ENCODE measurements at regions of chr11 and their contacts with region 1.

Region 1: DNA sequence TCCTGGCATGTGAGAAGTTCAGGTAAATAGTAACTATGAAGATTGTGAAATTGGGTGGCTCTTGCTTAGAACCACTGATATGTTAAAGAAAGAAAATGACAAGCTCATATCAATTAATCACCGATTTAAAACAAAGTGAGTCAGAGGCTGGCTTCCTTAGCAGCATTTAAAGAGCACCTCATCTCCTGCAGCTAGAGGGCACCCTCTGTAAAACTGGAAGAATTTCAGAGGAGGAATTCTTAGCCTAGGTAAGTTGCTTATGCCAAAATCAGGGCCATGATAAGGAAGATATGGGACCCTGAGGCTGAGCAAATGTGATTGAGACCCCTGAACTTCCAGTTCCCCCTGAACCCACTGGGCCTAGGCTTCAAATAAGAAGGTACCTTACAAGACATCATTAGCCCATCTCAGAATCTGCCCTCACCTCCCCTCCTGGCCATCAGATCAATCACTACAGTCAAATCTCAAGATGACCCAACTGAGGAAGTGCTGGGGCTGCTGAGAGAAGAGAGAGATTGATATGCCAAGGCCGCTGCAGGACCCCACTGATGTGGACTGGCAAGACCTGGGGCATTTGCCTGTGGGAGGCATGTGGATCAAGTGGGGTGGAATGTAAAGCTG is 8.6 kb upstream of the CD3E start:
- DNase-seq: peak in 12 of 14 experiments; percentile 23 to 81 (median 45)
- ATAC-seq: peak; percentile 85
- H3K4me3 ChIP-seq: no peak overlapping the region
- H3K4me3 Mint-ChIP-seq: no peak overlapping the region
- H3K27ac ChIP-seq: no peak overlapping the region
- H3K27ac Mint-ChIP-seq: peak overlapping the region; percentile 29
- H3K4me1 ChIP-seq: peaks cover 12% of the 10 kb centered on the region
- H3K4me1 Mint-ChIP-seq: peaks cover 36% of the 10 kb centered on the region
- H3K27me3 ChIP-seq: no peaks in the 10 kb centered on the region
- H3K27me3 Mint-ChIP-seq: no peaks in the 10 kb centered on the region
- CTCF ChIP-seq: peak; percentile 76

Region 2: DNA sequence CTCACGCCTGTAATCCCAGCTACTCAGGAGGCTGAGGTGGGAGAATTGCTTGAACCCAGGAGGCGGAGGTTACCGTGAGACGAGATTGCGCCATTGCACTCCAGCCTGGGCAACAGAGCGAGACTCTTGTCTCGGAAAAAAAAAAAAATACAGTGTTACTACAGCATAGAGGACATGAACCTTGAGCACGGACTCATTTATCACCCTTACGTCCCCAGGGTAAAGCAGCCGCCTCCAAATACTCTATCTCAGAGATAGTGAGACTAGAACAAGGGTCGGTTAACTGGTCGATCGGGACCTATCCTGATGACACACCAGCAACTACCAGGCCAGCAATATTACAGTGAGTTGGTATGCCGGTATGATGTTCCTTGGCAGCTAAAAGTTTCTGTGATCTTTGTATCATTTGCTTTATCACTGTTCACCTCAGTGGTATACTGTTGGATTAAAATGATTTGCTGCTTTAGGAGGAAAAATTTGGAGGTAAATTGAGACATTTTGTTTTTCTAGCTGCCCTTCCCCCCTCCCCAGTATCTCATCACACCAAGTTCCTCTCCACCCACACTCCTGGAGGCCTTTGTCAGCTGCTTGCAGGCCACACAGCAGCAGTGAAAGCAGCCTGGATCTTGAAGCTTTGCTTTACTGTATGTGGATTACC is 1124.4 kb before region 1 on chr11:
- CTCF ChIA-PET with region 1: no interaction called
- POLR2A ChIA-PET with region 1: no interaction called
- intact Hi-C with region 1: no loop called
- DNase-seq: no peak
- ATAC-seq: no peak
- H3K4me3 ChIP-seq: no peak overlapping the region
- H3K4me3 Mint-ChIP-seq: no peak overlapping the region
- H3K27ac ChIP-seq: no peak overlapping the region
- H3K27ac Mint-ChIP-seq: peak overlapping the region; percentile 47
- H3K4me1 ChIP-seq: no peaks in the 10 kb centered on the region
- H3K4me1 Mint-ChIP-seq: peaks cover 10% of the 10 kb centered on the region
- H3K27me3 ChIP-seq: no peaks in the 10 kb centered on the region
- H3K27me3 Mint-ChIP-seq: no peaks in the 10 kb centered on the region
- CTCF ChIP-seq: no peak

Region 3: GRCh38 chr11:118216621-118217481 is 79.1 kb before region 1 on chr11:
- CTCF ChIA-PET with region 1: interaction called, 10 read pairs
- POLR2A ChIA-PET with region 1: interaction called, 3 read pairs
- intact Hi-C with region 1: no loop called
- DNase-seq: peak in 11 of 14 experiments; percentile 19 to 80 (median 37)
- ATAC-seq: peak; percentile 75
- H3K4me3 ChIP-seq: peak overlapping the region; percentile 40
- H3K4me3 Mint-ChIP-seq: peak overlapping the region; percentile 84
- H3K27ac ChIP-seq: peak overlapping the region; percentile 10 to 52
- H3K27ac Mint-ChIP-seq: no peak overlapping the region
- H3K4me1 ChIP-seq: peaks cover 89% of the 10 kb centered on the region
- H3K4me1 Mint-ChIP-seq: peaks cover 99% of the 10 kb centered on the region
- H3K27me3 ChIP-seq: no peaks in the 10 kb centered on the region
- H3K27me3 Mint-ChIP-seq: no peaks in the 10 kb centered on the region
- CTCF ChIP-seq: no peak

Region 4: DNA sequence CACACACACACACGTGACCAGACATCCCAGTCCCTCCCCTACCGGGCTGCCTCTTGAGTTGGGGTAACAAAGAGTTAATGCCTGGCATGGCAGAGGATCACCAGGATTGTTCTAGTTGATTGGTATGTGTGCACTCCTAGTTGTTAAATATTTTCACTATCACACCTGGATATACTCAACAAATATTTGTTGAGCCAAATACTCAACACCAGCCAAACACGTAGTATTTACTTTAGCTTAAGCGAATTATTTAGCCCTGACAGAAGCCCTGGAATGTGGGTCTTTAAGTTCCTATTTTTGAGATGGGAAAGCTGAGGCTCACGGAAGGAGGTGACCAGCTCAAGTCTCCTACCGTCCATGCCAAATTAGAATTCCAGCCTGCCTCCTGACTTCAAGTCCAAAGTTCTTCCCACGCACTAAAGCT is 19.1 kb after region 1 on chr11:
- CTCF ChIA-PET with region 1: interaction called, 19 read pairs
- POLR2A ChIA-PET with region 1: interaction called, 6 read pairs
- intact Hi-C with region 1: loop called in 1 of 2 experiments (anchors 2 kb)
- DNase-seq: no peak
- ATAC-seq: no peak
- H3K4me3 ChIP-seq: no peak overlapping the region
- H3K4me3 Mint-ChIP-seq: peak overlapping the region; percentile 78
- H3K27ac ChIP-seq: peak overlapping the region; percentile 20 to 87
- H3K27ac Mint-ChIP-seq: peak overlapping the region; percentile 100
- H3K4me1 ChIP-seq: peaks cover 91% of the 10 kb centered on the region
- H3K4me1 Mint-ChIP-seq: peaks cover 96% of the 10 kb centered on the region
- H3K27me3 ChIP-seq: no peaks in the 10 kb centered on the region
- H3K27me3 Mint-ChIP-seq: no peaks in the 10 kb centered on the region
- CTCF ChIP-seq: no peak

Region 5: GRCh38 chr11:118338637-118339061 is 42.7 kb after region 1 on chr11:
- CTCF ChIA-PET with region 1: interaction called, 56 read pairs
- POLR2A ChIA-PET with region 1: interaction called, 11 read pairs
- intact Hi-C with region 1: no loop called
- DNase-seq: peak; percentile 61 to 96 (median 86)
- ATAC-seq: peak; percentile 66
- H3K4me3 ChIP-seq: peak overlapping the region; percentile 86
- H3K4me3 Mint-ChIP-seq: peak overlapping the region; percentile 97
- H3K27ac ChIP-seq: peak overlapping the region; percentile 90
- H3K27ac Mint-ChIP-seq: peak overlapping the region; percentile 98
- H3K4me1 ChIP-seq: peaks cover 62% of the 10 kb centered on the region
- H3K4me1 Mint-ChIP-seq: peaks cover 70% of the 10 kb centered on the region
- H3K27me3 ChIP-seq: no peaks in the 10 kb centered on the region
- H3K27me3 Mint-ChIP-seq: no peaks in the 10 kb centered on the region
- CTCF ChIP-seq: no peak

Region 6: DNA sequence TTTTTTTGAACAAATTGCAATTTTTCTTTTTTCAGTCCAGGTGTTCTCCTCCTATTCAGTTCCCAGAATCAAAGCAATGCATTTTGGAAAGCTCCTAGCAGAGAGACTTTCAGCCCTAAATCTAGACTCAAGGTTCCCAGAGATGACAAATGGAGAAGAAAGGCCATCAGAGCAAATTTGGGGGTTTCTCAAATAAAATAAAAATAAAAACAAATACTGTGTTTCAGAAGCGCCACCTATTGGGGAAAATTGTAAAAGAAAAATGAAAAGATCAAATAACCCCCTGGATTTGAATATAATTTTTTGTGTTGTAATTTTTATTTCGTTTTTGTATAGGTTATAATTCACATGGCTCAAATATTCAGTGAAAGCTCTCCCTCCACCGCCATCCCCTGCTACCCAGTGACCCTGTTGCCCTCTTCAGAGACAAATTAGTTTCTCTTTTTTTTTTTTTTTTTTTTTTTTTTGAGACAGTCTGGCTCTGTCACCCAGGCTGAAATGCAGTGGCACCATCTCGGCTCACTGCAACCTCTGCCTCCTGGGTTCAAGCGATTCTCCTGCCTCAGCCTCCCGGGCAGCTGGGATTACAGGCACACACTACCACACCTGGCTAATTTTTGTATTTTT is 57.3 kb after region 1 on chr11:
- CTCF ChIA-PET with region 1: interaction called, 56 read pairs
- POLR2A ChIA-PET with region 1: interaction called, 9 read pairs
- intact Hi-C with region 1: loop called (anchors 1 kb)
- DNase-seq: peak in 3 of 14 experiments; percentile 72 to 77 (median 75)
- ATAC-seq: peak; percentile 54
- H3K4me3 ChIP-seq: no peak overlapping the region
- H3K4me3 Mint-ChIP-seq: no peak overlapping the region
- H3K27ac ChIP-seq: peak overlapping the region; percentile 7 to 50
- H3K27ac Mint-ChIP-seq: peak overlapping the region; percentile 98
- H3K4me1 ChIP-seq: peaks cover 17% of the 10 kb centered on the region
- H3K4me1 Mint-ChIP-seq: peaks cover 51% of the 10 kb centered on the region
- H3K27me3 ChIP-seq: no peaks in the 10 kb centered on the region
- H3K27me3 Mint-ChIP-seq: no peaks in the 10 kb centered on the region
- CTCF ChIP-seq: peak; percentile 77

Region 7: GRCh38 chr11:118359295-118359958 is 63.5 kb after region 1 on chr11 and contains the start of gene UBE4A:
- CTCF ChIA-PET with region 1: interaction called, 24 read pairs
- POLR2A ChIA-PET with region 1: interaction called, 11 read pairs
- intact Hi-C with region 1: no loop called
- DNase-seq: peak; percentile 95 to 99 (median 98)
- ATAC-seq: peak; percentile 84
- H3K4me3 ChIP-seq: peak within 1 kb of the TSS; percentile 74
- H3K4me3 Mint-ChIP-seq: peak within 1 kb of the TSS; percentile 92
- H3K27ac ChIP-seq: peak within 1 kb of the TSS; percentile 89
- H3K27ac Mint-ChIP-seq: peak within 1 kb of the TSS; percentile 99
- H3K4me1 ChIP-seq: peaks cover 31% of the 10 kb centered on the region
- H3K4me1 Mint-ChIP-seq: peaks cover 60% of the 10 kb centered on the region
- H3K27me3 ChIP-seq: no peaks in the 10 kb centered on the region
- H3K27me3 Mint-ChIP-seq: peaks cover 8% of the 10 kb centered on the region
- CTCF ChIP-seq: no peak
- total RNA-seq, gene UBE4A: 40.1 to 43.0 TPM

Region 8: GRCh38 chr11:118488480-118489109 is 192.7 kb after region 1 on chr11:
- CTCF ChIA-PET with region 1: no interaction called
- POLR2A ChIA-PET with region 1: no interaction called
- intact Hi-C with region 1: loop called (anchors 1 to 5 kb)
- DNase-seq: peak; percentile 67 to 91 (median 76)
- ATAC-seq: peak; percentile 88
- H3K4me3 ChIP-seq: no peak overlapping the region
- H3K4me3 Mint-ChIP-seq: no peak overlapping the region
- H3K27ac ChIP-seq: peak overlapping the region in 1 of 2 donors; percentile 37
- H3K27ac Mint-ChIP-seq: peak overlapping the region; percentile 4
- H3K4me1 ChIP-seq: peaks cover 2% of the 10 kb centered on the region
- H3K4me1 Mint-ChIP-seq: peaks cover 5% of the 10 kb centered on the region
- H3K27me3 ChIP-seq: no peaks in the 10 kb centered on the region
- H3K27me3 Mint-ChIP-seq: no peaks in the 10 kb centered on the region
- CTCF ChIP-seq: peak; percentile 89